GM10248 (cell line): ENCODE measurements at regions of chr12 and their contacts with region 1.

Region 1: DNA sequence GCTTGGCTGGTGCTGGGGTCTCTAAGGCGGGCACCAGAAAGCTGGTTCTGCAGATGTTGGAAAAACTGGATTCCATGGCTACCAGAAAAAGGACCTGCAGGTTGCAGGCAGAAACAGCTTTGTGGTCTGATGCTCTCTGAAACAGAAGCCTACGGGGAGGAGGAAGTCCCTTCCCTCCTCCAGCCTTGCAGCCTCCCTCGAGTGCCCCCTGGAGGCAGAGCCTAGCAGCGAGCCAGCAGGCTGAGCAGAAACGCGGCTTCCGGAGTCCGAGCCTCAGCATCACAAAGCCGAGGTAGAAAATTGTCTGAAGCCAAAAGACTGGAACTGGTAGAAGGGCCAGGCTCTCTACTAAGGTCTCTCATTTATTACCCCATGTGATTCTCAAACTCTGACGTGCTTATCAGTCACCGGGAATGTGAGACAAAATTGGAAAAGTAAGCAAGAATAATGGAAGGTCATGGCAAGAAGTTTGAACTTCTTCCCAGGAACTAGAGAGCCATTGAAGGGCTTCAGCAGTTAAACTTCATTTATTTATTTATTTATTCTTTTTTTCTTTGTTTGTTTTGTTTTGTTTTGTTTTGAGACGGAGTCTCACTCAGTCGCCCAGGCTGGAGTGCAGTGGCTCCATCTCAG is 82.2 kb upstream of the CPSF6 start:
- DNase-seq: peak; percentile 85
- CTCF ChIP-seq: peak; percentile 97

Region 2: DNA sequence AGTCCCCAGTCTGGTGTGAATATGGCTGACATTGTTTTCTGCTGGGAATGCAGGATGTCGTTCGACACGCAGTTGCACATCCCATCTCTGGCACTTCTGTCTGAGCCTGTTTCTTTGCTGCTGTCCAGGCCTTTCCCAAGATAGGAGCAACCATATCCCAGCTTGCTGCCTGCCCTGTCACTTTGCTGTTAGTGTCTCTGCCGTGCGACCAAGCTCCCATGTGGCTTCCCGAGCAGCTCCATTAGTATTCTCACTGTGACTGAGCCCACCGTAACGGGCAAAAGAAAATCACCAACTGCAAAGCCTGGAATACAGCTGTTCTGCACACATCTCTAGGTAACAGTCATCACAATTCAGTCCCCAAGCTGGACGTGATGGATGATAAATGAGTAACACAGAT is 16.2 kb after region 1 on chr12:
- CTCF ChIA-PET with region 1: interaction called, 47 read pairs
- POLR2A ChIA-PET with region 1: no interaction called
- DNase-seq: no peak
- CTCF ChIP-seq: no peak

Region 3: DNA sequence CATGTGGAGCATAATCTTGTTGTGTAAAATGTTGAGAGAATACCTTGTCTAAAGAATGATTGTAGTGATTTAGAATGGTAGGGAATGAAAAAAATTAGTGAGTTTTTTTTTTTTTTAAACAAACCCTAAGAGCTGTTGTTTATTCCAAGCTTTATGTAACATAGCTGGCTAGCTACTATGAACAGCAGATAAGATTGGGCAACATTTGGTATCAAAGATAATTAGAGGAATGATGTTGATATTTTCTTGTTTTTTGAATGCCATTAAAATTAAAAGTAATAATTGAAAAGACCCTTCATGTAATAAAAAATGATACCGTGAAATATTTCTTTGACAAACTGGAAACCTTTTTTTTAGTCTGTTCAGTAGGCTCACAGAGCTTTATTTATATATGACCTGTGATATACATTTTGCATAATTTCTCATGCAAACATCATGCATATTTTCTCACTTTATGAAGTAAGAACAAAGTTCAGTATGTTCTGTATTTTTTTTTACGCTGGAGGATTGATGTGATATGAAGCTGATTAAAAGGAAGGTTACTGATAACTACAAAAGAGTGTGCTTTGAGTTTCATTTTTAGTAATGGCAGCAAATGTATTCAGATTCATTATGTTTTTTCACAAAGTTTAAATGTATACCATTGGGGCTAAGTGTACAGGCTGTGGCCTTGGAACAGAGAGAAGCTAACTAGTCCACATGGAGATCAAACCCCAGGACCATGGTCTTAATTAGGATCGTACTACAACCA is 90.3 kb after region 1 on chr12:
- CTCF ChIA-PET with region 1: interaction called, 99 read pairs
- POLR2A ChIA-PET with region 1: interaction called, 5 read pairs
- DNase-seq: no peak
- CTCF ChIP-seq: no peak

Region 4: DNA sequence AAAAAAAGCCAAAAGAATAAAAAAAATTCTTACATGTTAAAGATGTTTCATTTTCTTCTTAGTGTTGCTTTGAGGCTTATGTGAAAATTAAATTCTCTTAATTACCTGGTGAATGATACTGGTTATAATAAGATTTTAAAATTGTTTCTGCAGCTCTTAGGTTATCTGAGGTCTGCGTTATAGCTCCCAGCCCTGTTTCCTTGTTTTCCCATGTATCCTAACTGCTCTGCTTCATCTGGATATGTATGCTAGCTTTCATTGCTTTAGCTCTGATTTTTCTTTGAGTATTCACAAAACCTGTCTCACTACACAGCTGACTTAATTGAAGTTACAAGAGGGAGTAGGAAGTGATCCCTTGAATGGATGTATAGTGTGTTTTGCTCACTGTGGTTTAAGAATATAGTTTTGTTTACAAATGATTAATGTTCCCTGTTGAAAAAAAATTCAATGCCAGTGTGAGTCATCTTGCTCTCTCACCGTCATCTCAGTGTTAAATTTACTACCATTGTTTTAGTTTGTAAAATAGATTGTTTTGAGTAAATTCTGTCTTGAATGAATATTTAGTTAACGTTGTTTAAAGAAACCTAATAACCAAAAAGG is 109.0 kb after region 1 on chr12:
- CTCF ChIA-PET with region 1: interaction called, 12 read pairs
- POLR2A ChIA-PET with region 1: no interaction called
- DNase-seq: no peak
- CTCF ChIP-seq: no peak

Region 5: GRCh38 chr12:69570545-69571399 is 413.6 kb after region 1 on chr12:
- CTCF ChIA-PET with region 1: interaction called, 14 read pairs
- POLR2A ChIA-PET with region 1: no interaction called
- DNase-seq: peak; percentile 52
- CTCF ChIP-seq: peak; percentile 70